ENCODE measurements at regions of chr21 and their contacts with region 1.

Region 1: DNA sequence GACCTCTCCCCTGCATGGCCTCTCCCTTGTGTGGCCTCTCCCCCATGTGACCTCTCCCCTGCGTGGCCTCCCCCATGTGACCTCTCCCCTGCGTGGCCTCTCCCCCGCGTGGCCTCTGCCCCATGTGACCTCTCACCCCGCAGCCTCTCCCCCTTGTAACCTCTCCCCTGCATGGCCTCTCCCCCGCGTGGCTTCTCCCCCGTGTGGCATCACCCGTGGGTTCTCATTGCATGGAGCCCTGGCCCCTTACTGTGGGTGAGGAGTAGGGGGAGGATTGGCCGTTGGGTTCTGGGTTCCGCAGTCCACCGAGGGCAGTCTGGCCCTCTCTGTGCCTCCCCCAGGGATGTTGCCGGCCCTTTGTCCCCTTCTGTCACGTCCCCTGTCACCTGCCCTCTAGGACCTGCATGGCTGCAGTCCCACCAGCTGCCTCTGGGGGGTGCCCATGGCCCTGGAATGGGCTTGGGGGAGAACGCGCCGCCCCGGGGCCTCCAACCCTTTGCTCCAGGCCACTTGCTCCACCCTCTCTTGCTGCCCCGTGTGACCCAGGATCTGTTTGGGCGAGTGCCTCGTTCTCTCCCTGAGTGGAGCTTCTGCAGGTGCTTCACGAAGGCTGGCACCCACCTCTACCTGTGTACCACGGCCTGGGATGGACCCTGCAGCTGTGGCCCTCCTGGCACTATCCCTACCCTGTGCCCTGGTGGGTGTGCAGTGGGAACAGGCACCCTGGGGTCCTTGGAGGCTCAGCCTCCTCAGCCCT is 21.3 kb downstream of the RRP1 start:
- DNase-seq: peak; percentile 91 to 96 (median 93)
- ATAC-seq: peak; percentile 88
- H3K4me3 ChIP-seq: no peak overlapping the region
- H3K4me1 ChIP-seq: peaks cover 22% of the 10 kb centered on the region
- CTCF ChIP-seq: peak; percentile 92

Region 2: DNA sequence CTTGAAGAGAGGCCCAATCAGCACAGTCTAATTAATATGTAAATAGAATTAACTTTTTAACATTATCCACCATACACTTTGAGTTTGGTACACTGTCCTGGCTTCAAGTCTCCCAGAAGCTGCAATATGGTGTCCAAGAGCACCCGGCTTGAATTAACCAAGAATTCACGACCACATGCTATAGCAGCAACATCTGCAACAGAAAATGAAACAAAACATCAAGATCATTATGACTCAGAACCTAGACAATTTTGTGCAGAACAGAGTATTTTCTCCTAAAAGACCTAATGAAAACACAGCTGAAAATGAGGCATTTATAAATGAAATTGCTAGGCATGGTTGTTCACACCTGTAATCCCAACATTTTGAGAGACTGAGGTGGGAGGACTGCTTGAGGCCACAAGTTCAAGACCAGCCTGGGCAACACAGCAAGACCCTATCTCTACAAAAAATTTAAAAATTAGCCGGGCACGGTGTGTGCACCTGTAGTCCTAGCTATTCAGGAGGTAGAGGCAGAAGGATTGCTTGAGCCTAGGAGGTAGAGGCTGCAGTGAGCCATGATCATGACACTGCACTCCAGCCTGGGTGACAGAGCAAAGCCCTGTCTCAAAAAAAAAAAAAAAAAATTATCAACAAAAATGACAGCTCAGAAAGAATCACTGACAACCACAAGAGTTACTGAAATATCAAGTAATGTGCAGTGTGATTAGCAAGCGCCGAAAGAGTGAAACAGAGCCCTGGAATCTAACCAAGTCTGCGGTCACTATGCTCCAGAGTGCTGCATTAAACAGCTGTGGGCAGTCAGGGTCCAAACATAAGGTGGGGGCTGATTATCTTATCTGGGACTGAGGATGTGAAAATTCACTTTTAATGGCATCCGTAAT is 196.7 kb before region 1 on chr21:
- intact Hi-C with region 1: no loop called
- DNase-seq: no peak
- ATAC-seq: no peak
- H3K4me3 ChIP-seq: no peak overlapping the region
- H3K4me1 ChIP-seq: peaks cover 25% of the 10 kb centered on the region
- CTCF ChIP-seq: no peak

Region 3: GRCh38 chr21:43961382-43961909 is 150.8 kb after region 1 on chr21:
- intact Hi-C with region 1: no loop called
- DNase-seq: no peak
- ATAC-seq: no peak
- H3K4me3 ChIP-seq: no peak overlapping the region
- H3K4me1 ChIP-seq: no peaks in the 10 kb centered on the region
- CTCF ChIP-seq: no peak

Region 4: DNA sequence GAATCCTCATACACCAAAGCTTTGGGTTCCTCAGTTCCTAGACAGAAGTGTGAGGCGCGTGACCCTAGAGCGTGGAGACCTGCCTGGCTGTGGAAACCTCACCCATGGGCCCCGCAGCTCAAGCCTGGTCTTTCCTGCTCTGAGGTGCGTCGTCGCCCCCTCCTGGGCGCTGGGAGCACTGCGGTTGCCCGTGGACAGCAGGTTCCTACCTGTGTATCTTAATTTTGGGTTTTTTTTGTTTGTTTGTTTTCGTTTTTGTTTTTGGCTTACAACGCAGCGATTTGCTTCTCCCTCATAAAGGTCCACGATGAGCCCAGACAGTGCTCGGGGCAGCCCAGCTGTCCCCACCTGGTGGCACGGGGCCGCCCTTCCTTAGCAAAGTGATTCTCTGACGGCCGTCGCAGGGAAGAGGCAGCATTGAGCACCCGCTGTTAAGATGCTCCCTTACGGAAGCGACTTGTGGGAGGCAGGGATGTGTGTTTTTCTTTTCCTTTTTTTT is 164.9 kb after region 1 on chr21:
- intact Hi-C with region 1: loop called in 1 of 2 experiments (anchors 5 kb)
- DNase-seq: peak; percentile 82 to 90 (median 87)
- ATAC-seq: peak; percentile 88
- H3K4me3 ChIP-seq: no peak overlapping the region
- H3K4me1 ChIP-seq: no peaks in the 10 kb centered on the region
- CTCF ChIP-seq: peak; percentile 82

Measured in mucosa of descending colon (tissue), 3 donors.